ENCODE measurements at regions of chr15 and their contacts with region 1.

Region 1: DNA sequence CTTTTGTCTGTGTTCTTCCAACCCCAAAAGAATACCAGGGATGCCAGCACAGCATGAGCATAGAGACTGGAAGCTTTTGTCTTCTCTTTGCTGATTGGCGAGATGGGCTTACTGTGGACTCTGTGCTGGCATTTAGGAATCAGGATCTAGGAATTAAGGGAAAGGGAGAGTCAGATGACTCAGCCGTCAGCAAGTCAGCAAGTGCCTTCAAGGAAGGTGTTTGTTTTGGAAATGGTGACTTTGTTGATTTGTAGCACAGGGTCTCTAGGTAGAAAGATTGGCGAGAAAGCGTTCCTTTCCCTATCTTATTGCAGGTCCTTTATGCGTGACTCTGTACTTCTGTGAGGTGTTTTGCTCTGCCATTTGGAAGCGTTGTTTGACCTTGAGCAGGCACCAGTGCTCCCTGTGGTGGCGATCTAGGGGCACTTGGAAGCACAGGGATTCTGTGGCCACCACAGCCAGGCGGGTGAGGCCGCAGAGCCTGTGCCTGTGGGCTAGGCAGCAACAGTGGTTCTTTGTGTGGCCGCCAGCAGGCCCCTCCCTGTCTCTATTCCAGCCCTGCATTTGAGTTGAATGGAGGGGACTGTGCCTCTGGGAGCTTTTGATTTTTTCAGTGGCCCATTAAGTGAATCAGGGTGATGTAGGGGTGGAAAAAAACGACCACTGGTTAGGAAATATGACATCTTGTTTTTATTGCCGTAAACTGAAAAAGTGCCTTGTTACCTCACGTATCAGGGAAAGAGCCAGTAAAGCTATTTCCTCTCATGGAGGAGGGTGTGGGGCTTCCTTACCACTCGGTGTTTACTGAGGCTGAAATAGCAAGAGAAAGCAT is 19.0 kb downstream of the FAN1 start:
- DNase-seq: peak in 1 of 5 donors; percentile 37
- ATAC-seq: peak; percentile 14 to 53 (median 36)
- H3K4me3 ChIP-seq: no peak overlapping the region
- H3K27ac ChIP-seq: peak overlapping the region; percentile 15 to 83 (median 67)
- H3K4me1 ChIP-seq: peaks cover 0 to 60% (median 28%) of the 10 kb centered on the region in 12 donors
- H3K27me3 ChIP-seq: no peaks in the 10 kb centered on the region
- CTCF ChIP-seq: no peak
- POLR2A ChIP-seq: no peak

Region 2: GRCh38 chr15:30979457-30979856 is 56.8 kb after region 1 on chr15:
- intact Hi-C with region 1: loop called in 3 of 10 experiments (anchors 5 to 10 kb)
- DNase-seq: no peak
- ATAC-seq: peak in 2 of 4 donors; percentile 53 to 62
- H3K4me3 ChIP-seq: no peak overlapping the region
- H3K27ac ChIP-seq: peak overlapping the region in 1 of 12 donors; percentile 39
- H3K4me1 ChIP-seq: peaks cover 0 to 64% (median 34%) of the 10 kb centered on the region in 12 donors
- H3K27me3 ChIP-seq: no peaks in the 10 kb centered on the region
- CTCF ChIP-seq: no peak
- POLR2A ChIP-seq: no peak

Region 3: GRCh38 chr15:30985081-30985531 is 62.4 kb after region 1 on chr15:
- intact Hi-C with region 1: loop called in 2 of 10 experiments (anchors 5 to 10 kb)
- DNase-seq: peak in 3 of 5 donors; percentile 29 to 39 (median 32)
- ATAC-seq: peak; percentile 42 to 86 (median 54)
- H3K4me3 ChIP-seq: peak overlapping the region in 1 of 12 donors; percentile 16
- H3K27ac ChIP-seq: peak overlapping the region in 10 of 12 donors; percentile 1 to 57 (median 44)
- H3K4me1 ChIP-seq: peaks cover 0 to 88% (median 70%) of the 10 kb centered on the region in 12 donors
- H3K27me3 ChIP-seq: no peaks in the 10 kb centered on the region
- CTCF ChIP-seq: no peak
- POLR2A ChIP-seq: no peak

Measured in heart left ventricle (tissue), 16 donors.